K562 (cell line): ENCODE measurements at regions of chr1 and their contacts with region 1.

Region 1: GRCh38 chr1:85307987-85308832 is 31.8 kb upstream of the BCL10 start:
- DNase-seq: peak; percentile 69 to 83 (median 74)
- ATAC-seq: peak; percentile 99
- H3K4me3 ChIP-seq: no peak overlapping the region
- H3K27ac ChIP-seq: no peak overlapping the region
- H3K4me1 ChIP-seq: no peaks in the 10 kb centered on the region
- H3K27me3 ChIP-seq: peaks cover 2 to 12% of the 10 kb centered on the region in 2 experiments; a peak in 3 of 5 replicates
- CTCF ChIP-seq: peak; percentile 94 to 99 (median 99)
- EP300 ChIP-seq: no peak
- POLR2A ChIP-seq: no peak
- RAD21 ChIP-seq: peak; percentile 90 to 94

Region 2: GRCh38 chr1:85027242-85027983 is 280.8 kb before region 1 on chr1:
- CTCF ChIA-PET with region 1: no interaction called
- POLR2A ChIA-PET with region 1: no interaction called
- in situ Hi-C with region 1: no loop called
- intact Hi-C with region 1: no loop called
- DNase-seq: no peak
- ATAC-seq: peak; percentile 58; the same call in 1 of the 3 replicates
- H3K4me3 ChIP-seq: no peak overlapping the region
- H3K27ac ChIP-seq: no peak overlapping the region
- H3K4me1 ChIP-seq: no peaks in the 10 kb centered on the region
- H3K27me3 ChIP-seq: 0 out of 5 replicates have a peak, but pooled peaks cover 0 to 6% of the 10 kb centered on the region in 2 experiments
- CTCF ChIP-seq: peak in 1 of 3 experiments; percentile 16; a peak in 1 of 6 replicates
- EP300 ChIP-seq: no peak
- POLR2A ChIP-seq: no peak
- RAD21 ChIP-seq: peak; percentile 13 to 17; a peak in 2 of 4 replicates

Region 3: GRCh38 chr1:85240174-85240601 is 68.0 kb before region 1 on chr1:
- CTCF ChIA-PET with region 1: no interaction called
- POLR2A ChIA-PET with region 1: no interaction called
- in situ Hi-C with region 1: no loop called
- intact Hi-C with region 1: no loop called
- DNase-seq: peak in 2 of 4 experiments; percentile 30 to 38
- ATAC-seq: peak; percentile 73
- H3K4me3 ChIP-seq: no peak overlapping the region
- H3K27ac ChIP-seq: no peak overlapping the region
- H3K4me1 ChIP-seq: peaks cover 0 to 22% of the 10 kb centered on the region in 2 experiments; a peak in 4 of 5 replicates
- H3K27me3 ChIP-seq: no peaks in the 10 kb centered on the region
- CTCF ChIP-seq: peak; percentile 43 to 70 (median 44); a peak in 5 of 6 replicates
- EP300 ChIP-seq: no peak
- POLR2A ChIP-seq: no peak
- RAD21 ChIP-seq: peak; percentile 63 to 79

Region 4: DNA sequence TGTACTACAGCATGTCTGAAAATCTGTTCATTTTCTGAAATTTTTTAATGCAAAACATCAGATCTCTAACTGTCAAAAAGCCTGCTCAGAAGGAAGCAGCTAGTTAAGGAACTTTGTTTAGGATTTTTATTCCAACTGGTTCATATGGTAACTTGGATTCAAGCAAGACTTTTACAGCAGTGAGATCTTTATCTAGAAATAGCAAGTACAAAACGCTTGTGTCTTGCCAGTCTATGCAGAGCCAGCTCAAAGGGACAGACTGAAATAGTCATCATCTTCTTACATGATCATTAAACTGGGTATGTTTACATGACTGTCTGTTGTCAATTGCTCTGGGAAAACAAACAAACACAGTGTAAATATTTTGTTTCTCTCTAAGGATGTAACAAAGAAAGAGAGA is 119.1 kb after region 1 on chr1:
- CTCF ChIA-PET with region 1: no interaction called
- POLR2A ChIA-PET with region 1: no interaction called
- in situ Hi-C with region 1: no loop called
- intact Hi-C with region 1: no loop called
- DNase-seq: no peak
- ATAC-seq: no peak
- H3K4me3 ChIP-seq: no peak overlapping the region
- H3K27ac ChIP-seq: no peak overlapping the region
- H3K4me1 ChIP-seq: no peaks in the 10 kb centered on the region
- H3K27me3 ChIP-seq: no peaks in the 10 kb centered on the region
- CTCF ChIP-seq: no peak
- EP300 ChIP-seq: no peak
- POLR2A ChIP-seq: no peak
- RAD21 ChIP-seq: no peak

Region 5: DNA sequence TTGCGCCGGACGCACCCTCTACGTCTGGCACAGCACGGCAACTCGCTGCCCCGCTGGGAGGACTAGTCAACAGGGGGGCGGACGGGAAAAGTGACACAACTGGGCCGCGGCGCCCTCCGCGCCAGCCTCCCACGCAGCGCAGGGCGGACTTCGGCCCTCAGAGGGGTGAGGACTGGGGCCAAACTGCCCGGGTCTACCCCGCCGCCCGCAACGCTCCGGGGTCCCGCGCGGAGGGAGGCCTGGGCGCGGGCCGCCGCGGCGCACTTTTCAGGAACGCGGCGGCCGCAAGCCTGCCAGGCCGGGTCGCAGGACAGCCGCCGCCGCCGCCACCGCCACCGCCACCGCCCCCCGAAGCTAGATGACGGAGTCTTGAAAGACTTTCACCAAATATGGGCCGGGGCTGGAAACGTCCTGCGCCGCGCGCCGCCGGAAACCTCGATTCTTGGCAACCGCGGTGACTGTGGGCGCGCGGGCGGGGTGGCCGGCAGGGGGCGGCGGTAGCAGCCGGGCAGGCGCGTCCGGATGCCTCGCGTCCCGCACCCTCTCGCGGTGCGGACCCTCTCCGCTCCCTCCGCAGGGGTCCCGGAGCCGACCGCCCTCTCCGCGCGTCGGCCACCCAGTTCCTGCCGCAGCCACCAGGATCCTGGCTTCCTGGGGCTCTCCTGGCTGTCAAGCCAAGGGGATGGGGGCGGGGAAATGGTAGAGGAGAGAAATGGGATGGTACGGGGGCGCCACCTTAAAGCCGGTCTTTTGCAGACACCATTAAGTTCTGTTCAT is 268.6 kb after region 1 on chr1:
- CTCF ChIA-PET with region 1: interaction called, 10 read pairs
- POLR2A ChIA-PET with region 1: interaction called, 3 read pairs
- in situ Hi-C with region 1: loop called (anchors 5 kb)
- intact Hi-C with region 1: loop called (anchors 1 kb)
- DNase-seq: peak; percentile 75 to 82 (median 76)
- ATAC-seq: peak; percentile 85
- H3K4me3 ChIP-seq: peak overlapping the region; percentile 64
- H3K27ac ChIP-seq: peak overlapping the region; percentile 68
- H3K4me1 ChIP-seq: peaks cover 5 to 33% of the 10 kb centered on the region in 2 experiments; a peak in 4 of 5 replicates
- H3K27me3 ChIP-seq: no peaks in the 10 kb centered on the region
- CTCF ChIP-seq: peak; percentile 59 to 78 (median 67)
- EP300 ChIP-seq: no peak
- POLR2A ChIP-seq: peak; percentile 62; the same call in 1 of the 2 replicates
- RAD21 ChIP-seq: 0 out of 4 replicates have a peak, but pooled peaks of 1 of the 2 experiments have one; percentile 26

Region 6: DNA sequence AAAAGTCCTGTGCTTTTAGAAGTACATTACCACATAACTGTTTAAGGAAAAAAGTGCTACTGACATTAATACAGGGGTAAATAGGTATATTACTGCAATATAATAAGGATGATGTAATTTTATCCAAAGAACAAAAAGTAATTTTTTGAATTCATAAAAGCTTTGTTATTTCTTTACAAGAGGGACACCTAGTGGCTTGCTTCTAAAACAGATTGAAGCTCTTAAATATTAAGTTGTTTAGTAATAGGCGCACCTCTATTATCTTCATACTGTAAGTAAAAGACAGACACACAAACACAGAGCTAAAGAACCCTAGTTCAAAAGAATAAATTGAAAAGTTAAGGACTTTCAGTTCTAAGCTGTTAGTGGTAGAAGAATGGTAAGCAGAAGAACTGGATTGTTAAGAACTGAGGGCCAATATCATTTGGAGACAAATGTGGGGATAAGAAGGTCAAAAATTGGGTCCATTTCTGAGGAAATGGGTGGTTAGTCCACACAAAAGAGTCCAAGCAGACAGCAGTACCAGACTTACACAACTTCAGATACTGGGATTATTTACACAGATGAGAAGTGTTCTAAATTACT is 384.6 kb after region 1 on chr1:
- CTCF ChIA-PET with region 1: interaction called, 6 read pairs
- POLR2A ChIA-PET with region 1: no interaction called
- in situ Hi-C with region 1: loop called (anchors 10 kb)
- intact Hi-C with region 1: no loop called
- DNase-seq: peak in 1 of 4 experiments; percentile 6
- ATAC-seq: peak; percentile 37; the same call in 1 of the 3 replicates
- H3K4me3 ChIP-seq: no peak overlapping the region
- H3K27ac ChIP-seq: no peak overlapping the region
- H3K4me1 ChIP-seq: no peaks in the 10 kb centered on the region; a peak in 1 of 5 replicates
- H3K27me3 ChIP-seq: no peaks in the 10 kb centered on the region
- CTCF ChIP-seq: peak in 1 of 3 experiments; percentile 50; a peak in 2 of 6 replicates
- EP300 ChIP-seq: no peak
- POLR2A ChIP-seq: no peak
- RAD21 ChIP-seq: peak; percentile 35 to 53

Region 7: GRCh38 chr1:85707990-85708828 is 400.0 kb after region 1 on chr1 and contains the start of gene ZNHIT6:
- CTCF ChIA-PET with region 1: no interaction called
- POLR2A ChIA-PET with region 1: no interaction called
- in situ Hi-C with region 1: no loop called
- intact Hi-C with region 1: loop called (anchors 10 kb)
- DNase-seq: peak; percentile 86 to 96 (median 90)
- ATAC-seq: peak; percentile 99
- H3K4me3 ChIP-seq: peak within 1 kb of the TSS; percentile 83
- H3K27ac ChIP-seq: peak within 1 kb of the TSS; percentile 86
- H3K4me1 ChIP-seq: peaks cover 0 to 14% of the 10 kb centered on the region in 2 experiments; a peak in 2 of 5 replicates
- H3K27me3 ChIP-seq: no peaks in the 10 kb centered on the region
- CTCF ChIP-seq: peak; percentile 46 to 70 (median 63)
- EP300 ChIP-seq: peak; percentile 32
- POLR2A ChIP-seq: peak; percentile 92
- RAD21 ChIP-seq: no peak
- polyA plus RNA-seq, gene ZNHIT6: 15.4 to 21.7 TPM

Region 8: GRCh38 chr1:86018283-86018923 is 710.2 kb after region 1 on chr1:
- CTCF ChIA-PET with region 1: interaction called, 3 read pairs
- POLR2A ChIA-PET with region 1: no interaction called
- in situ Hi-C with region 1: no loop called
- intact Hi-C with region 1: loop called (anchors 1 kb)
- DNase-seq: peak; percentile 7 to 22 (median 20)
- ATAC-seq: peak; percentile 39; the same call in 1 of the 3 replicates
- H3K4me3 ChIP-seq: no peak overlapping the region
- H3K27ac ChIP-seq: no peak overlapping the region
- H3K4me1 ChIP-seq: no peaks in the 10 kb centered on the region
- H3K27me3 ChIP-seq: no peaks in the 10 kb centered on the region
- CTCF ChIP-seq: peak in 2 of 3 experiments; percentile 49 to 55; a peak in 4 of 6 replicates
- EP300 ChIP-seq: no peak
- POLR2A ChIP-seq: no peak
- RAD21 ChIP-seq: peak; percentile 38 to 58; a peak in 3 of 4 replicates

Region 9: DNA sequence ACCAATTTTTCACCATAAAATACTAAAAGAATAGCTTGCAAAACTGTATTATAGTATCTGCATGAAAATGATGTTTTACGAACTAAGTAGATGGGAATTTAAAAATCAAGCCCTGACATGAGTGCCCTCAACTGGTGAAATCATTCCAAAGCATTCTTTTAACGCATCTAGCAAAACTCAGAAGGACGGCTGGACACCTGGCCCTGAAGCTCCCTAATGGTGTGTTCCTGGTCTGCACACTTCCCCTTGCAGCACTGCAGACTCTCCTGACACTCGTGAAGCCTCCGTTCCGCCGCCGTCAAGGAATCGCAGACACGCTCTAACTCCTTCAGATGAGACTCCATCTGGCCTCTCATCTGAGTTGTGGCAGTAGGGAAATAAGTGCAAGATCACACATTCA is 1048.0 kb after region 1 on chr1:
- CTCF ChIA-PET with region 1: no interaction called
- POLR2A ChIA-PET with region 1: no interaction called
- in situ Hi-C with region 1: no loop called
- intact Hi-C with region 1: loop called (anchors 2 kb)
- DNase-seq: peak in 2 of 4 experiments; percentile 5 to 13
- ATAC-seq: peak; percentile 63
- H3K4me3 ChIP-seq: no peak overlapping the region
- H3K27ac ChIP-seq: no peak overlapping the region
- H3K4me1 ChIP-seq: no peaks in the 10 kb centered on the region
- H3K27me3 ChIP-seq: no peaks in the 10 kb centered on the region
- CTCF ChIP-seq: peak in 1 of 3 experiments; percentile 44; a peak in 2 of 6 replicates
- EP300 ChIP-seq: no peak
- POLR2A ChIP-seq: no peak
- RAD21 ChIP-seq: peak; percentile 33 to 40